ENCODE measurements at regions of chr20 and their contacts with region 1.

Region 1: DNA sequence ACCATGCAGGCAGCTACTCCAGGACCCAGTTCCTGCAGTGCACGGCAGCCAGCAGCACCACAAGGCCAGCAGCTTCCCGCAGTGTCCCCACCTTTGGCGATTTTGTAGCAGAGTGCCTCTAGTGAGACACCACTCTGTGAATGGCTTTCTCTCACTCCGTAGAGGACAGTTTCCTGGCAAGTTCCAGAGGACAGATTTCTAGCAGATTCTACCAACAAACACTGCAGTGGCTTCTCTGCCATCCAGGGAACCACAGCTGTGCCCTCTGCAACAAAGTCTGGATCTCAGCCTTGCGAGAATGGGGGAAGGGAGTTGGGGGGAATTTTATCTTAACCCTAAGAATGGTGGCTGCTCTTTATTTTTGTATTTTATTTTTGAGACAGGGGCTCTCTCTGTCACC is 28.7 kb downstream of the SNHG17 start:
- DNase-seq: no peak
- ATAC-seq: no peak
- H3K4me3 ChIP-seq: no peak overlapping the region
- H3K27ac ChIP-seq: no peak overlapping the region
- H3K4me1 ChIP-seq: peaks cover 0 to 2% (median 0%) of the 10 kb centered on the region in 12 donors
- H3K27me3 ChIP-seq: no peaks in the 10 kb centered on the region
- CTCF ChIP-seq: no peak
- POLR2A ChIP-seq: no peak

Region 2: GRCh38 chr20:38057351-38057972 is 349.0 kb before region 1 on chr20:
- intact Hi-C with region 1: loop called in 2 of 10 experiments (anchors 5 to 10 kb)
- DNase-seq: peak; percentile 80 to 93 (median 84)
- ATAC-seq: peak; percentile 70 to 93 (median 90)
- H3K4me3 ChIP-seq: no peak overlapping the region
- H3K27ac ChIP-seq: peak overlapping the region in 3 of 12 donors; percentile 13 to 42 (median 19)
- H3K4me1 ChIP-seq: peaks cover 0 to 31% (median 9%) of the 10 kb centered on the region in 12 donors
- H3K27me3 ChIP-seq: no peaks in the 10 kb centered on the region
- CTCF ChIP-seq: peak; percentile 85 to 96 (median 91)
- POLR2A ChIP-seq: no peak

Region 3: DNA sequence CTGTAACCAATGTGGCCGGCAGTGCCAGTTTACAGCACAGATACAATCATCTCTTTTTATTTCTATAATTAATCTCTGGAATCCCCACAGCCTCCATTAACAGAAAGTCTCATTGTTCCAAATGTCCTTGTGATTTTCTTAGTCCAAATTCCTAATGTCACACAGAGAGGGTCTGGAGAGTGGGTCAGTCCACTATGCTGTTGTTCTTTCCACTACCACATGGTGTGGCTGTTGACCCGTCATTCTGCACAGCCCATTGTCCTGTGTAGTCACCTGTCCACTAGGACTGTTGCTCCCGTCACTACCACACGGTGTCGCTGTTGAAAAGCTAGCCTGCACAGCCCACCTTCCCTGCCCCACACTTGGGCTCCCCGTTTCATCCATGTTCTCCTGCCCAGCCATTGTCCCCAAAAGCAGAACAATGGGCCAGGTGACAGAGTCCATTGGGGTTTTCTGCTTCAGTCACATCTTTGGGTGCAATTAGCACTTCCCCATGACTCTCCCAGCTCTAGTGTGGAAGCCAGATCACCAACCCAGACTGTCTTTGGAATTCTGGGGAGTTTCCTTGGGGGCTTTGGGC is 68.8 kb before region 1 on chr20:
- intact Hi-C with region 1: loop called in 5 of 10 experiments (anchors 5 to 10 kb)
- DNase-seq: no peak
- ATAC-seq: no peak
- H3K4me3 ChIP-seq: no peak overlapping the region
- H3K27ac ChIP-seq: no peak overlapping the region
- H3K4me1 ChIP-seq: peaks cover 0 to 6% (median 0%) of the 10 kb centered on the region in 12 donors
- H3K27me3 ChIP-seq: peaks cover 0 to 18% (median 0%) of the 10 kb centered on the region in 9 donors
- CTCF ChIP-seq: peak in 8 of 12 donors; percentile 8 to 39 (median 29)
- POLR2A ChIP-seq: no peak

Region 4: GRCh38 chr20:38343311-38344106 is 63.0 kb before region 1 on chr20:
- intact Hi-C with region 1: loop called in 5 of 10 experiments (anchors 5 to 10 kb)
- DNase-seq: peak in 1 of 5 donors; percentile 48
- ATAC-seq: peak in 1 of 4 donors; percentile 34
- H3K4me3 ChIP-seq: peak overlapping the region in 1 of 12 donors; percentile 10
- H3K27ac ChIP-seq: no peak overlapping the region
- H3K4me1 ChIP-seq: peaks cover 0 to 9% (median 2%) of the 10 kb centered on the region in 12 donors
- H3K27me3 ChIP-seq: no peaks in the 10 kb centered on the region
- CTCF ChIP-seq: no peak
- POLR2A ChIP-seq: no peak

Region 5: GRCh38 chr20:38357653-38358207 is 48.7 kb before region 1 on chr20:
- intact Hi-C with region 1: loop called in 1 of 10 experiments (anchors 2 kb)
- DNase-seq: no peak
- ATAC-seq: no peak
- H3K4me3 ChIP-seq: no peak overlapping the region
- H3K27ac ChIP-seq: peak overlapping the region in 1 of 12 donors; percentile 47
- H3K4me1 ChIP-seq: peaks cover 0 to 15% (median 0%) of the 10 kb centered on the region in 12 donors
- H3K27me3 ChIP-seq: no peaks in the 10 kb centered on the region
- CTCF ChIP-seq: no peak
- POLR2A ChIP-seq: no peak

Region 6: GRCh38 chr20:38725931-38726803 is 319.7 kb after region 1 on chr20:
- intact Hi-C with region 1: no loop called
- DNase-seq: peak in 2 of 5 donors; percentile 26 to 34
- ATAC-seq: no peak
- H3K4me3 ChIP-seq: no peak overlapping the region
- H3K27ac ChIP-seq: no peak overlapping the region
- H3K4me1 ChIP-seq: peaks cover 0 to 77% (median 22%) of the 10 kb centered on the region in 12 donors
- H3K27me3 ChIP-seq: peaks cover 88 to 100% (median 98%) of the 10 kb centered on the region in 9 donors
- CTCF ChIP-seq: peak in 9 of 12 donors; percentile 10 to 51 (median 30)
- POLR2A ChIP-seq: no peak